ENCODE measurements at regions of chr6 and their contacts with region 1.

Region 1: GRCh38 chr6:126033696-126034095 is 47.4 kb downstream of the TRMT11 start:
- DNase-seq: peak; percentile 19
- H3K4me3 ChIP-seq: no peak overlapping the region
- H3K27ac ChIP-seq: no peak overlapping the region
- H3K4me1 ChIP-seq: peaks cover 0 to 8% (median 2%) of the 10 kb centered on the region in 4 donors
- H3K27me3 ChIP-seq: no peaks in the 10 kb centered on the region
- CTCF ChIP-seq: peak; percentile 34 to 72 (median 54)
- EP300 ChIP-seq: no peak
- POLR2A ChIP-seq: no peak

Region 2: DNA sequence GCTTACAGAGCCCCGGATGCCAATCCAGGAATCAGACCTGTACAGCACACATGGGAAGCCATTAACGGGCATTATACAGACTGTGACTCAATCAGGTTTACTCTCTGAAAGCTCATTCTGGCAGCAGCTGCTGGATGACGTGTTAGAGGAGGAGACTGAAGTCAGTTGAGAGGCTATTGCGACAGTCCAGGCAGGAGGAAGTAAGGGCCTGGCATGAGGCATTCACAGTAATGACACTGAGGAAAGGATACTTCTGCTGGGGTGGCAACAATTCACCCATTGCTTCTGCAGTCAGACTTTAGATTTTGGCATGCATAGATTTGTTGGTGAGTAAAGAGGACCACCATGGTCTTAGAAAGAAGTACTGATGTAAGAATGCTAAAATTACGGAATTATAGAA is 435.3 kb before region 1 on chr6:
- in situ Hi-C with region 1: no loop called
- intact Hi-C with region 1: no loop called
- DNase-seq: peak; percentile 27
- H3K4me3 ChIP-seq: no peak overlapping the region
- H3K27ac ChIP-seq: no peak overlapping the region
- H3K4me1 ChIP-seq: no peaks in the 10 kb centered on the region
- H3K27me3 ChIP-seq: no peaks in the 10 kb centered on the region
- CTCF ChIP-seq: no peak
- EP300 ChIP-seq: no peak
- POLR2A ChIP-seq: no peak

Region 3: DNA sequence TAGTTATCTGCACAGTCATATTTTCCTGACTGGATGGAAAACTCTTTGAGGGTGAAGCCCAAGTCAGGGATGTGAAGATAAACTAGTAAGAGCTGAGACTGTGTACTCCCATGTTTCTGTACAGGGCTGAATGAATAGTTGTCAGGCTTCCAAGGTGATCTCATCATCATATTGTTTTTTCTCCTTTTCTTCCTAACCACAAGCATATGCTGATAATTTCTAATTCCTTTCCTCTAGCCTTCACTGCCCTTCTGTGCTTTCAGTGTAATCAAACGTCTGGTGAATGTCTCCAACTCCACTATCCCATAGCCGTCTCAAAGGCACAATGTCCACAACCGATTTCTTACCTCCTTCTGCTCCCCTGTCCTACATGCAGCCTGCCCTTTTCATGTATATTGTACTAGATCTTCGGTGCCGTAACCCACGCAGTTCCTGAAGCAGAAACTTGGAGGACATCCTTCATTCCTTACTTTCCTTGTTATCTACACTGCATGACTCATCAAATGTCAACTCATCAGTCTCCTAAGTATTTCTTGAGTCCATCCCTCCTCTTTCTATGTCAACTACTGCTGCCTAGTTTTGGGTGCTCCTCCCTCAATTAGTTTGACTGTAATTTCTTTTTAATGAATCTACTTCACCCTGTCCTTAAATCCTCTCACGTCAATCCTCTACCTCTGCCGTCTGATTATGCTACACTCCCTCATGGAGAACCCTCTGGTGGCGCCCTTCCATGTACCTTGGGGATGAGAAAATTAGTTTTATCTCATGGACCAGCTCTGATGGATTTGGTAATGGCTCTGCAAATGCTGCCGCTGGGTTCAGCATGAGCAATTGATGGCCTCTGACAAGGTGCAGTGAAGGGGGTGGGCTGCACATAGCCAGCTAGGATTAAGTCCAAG is 221.1 kb before region 1 on chr6:
- in situ Hi-C with region 1: no loop called
- intact Hi-C with region 1: no loop called
- DNase-seq: no peak
- H3K4me3 ChIP-seq: no peak overlapping the region
- H3K27ac ChIP-seq: peak overlapping the region in 2 of 4 donors; percentile 2 to 21
- H3K4me1 ChIP-seq: peaks cover 0 to 34% (median 7%) of the 10 kb centered on the region in 4 donors
- H3K27me3 ChIP-seq: no peaks in the 10 kb centered on the region
- CTCF ChIP-seq: no peak
- EP300 ChIP-seq: no peak
- POLR2A ChIP-seq: no peak

Region 4: GRCh38 chr6:126339796-126340609 is 306.3 kb after region 1 on chr6 and contains the start of gene CENPW:
- in situ Hi-C with region 1: loop called in 1 of 4 experiments (anchors 25 kb)
- intact Hi-C with region 1: no loop called
- DNase-seq: peak; percentile 93
- H3K4me3 ChIP-seq: peak within 1 kb of the TSS; percentile 42 to 77 (median 56)
- H3K27ac ChIP-seq: peak within 1 kb of the TSS in 3 of 4 donors; percentile 64 to 74 (median 71)
- H3K4me1 ChIP-seq: peaks cover 9 to 25% (median 11%) of the 10 kb centered on the region in 4 donors
- H3K27me3 ChIP-seq: no peaks in the 10 kb centered on the region
- CTCF ChIP-seq: no peak
- EP300 ChIP-seq: no peak
- POLR2A ChIP-seq: no peak
- total RNA-seq, gene CENPW: 2.2 TPM in 1 of 4 donors, not detected in the others

Measured in transverse colon (tissue), 4 donors.